Vagina (tissue), 2 donors: ENCODE measurements at regions of chr11 and their contacts with region 1.

Region 1: GRCh38 chr11:114059278-114059983 is at the start of gene ZBTB16:
- DNase-seq: no peak
- H3K4me3 ChIP-seq: peak within 1 kb of the TSS; percentile 81 to 97
- H3K27ac ChIP-seq: peak within 1 kb of the TSS; percentile 96
- H3K4me1 ChIP-seq: peaks cover 42% of the 10 kb centered on the region
- H3K27me3 ChIP-seq: no peaks in the 10 kb centered on the region
- CTCF ChIP-seq: peak in 2 of 3 experiments; percentile 6 to 29
- POLR2A ChIP-seq: peak; percentile 7 to 81
- total RNA-seq, gene ZBTB16: 243 TPM

Region 2: GRCh38 chr11:114159802-114160632 is 100.6 kb after region 1 on chr11:
- intact Hi-C with region 1: loop called (anchors 2 kb)
- DNase-seq: peak in 1 of 2 donors; percentile 98
- H3K4me3 ChIP-seq: peak overlapping the region; percentile 26 to 31
- H3K27ac ChIP-seq: peak overlapping the region; percentile 95
- H3K4me1 ChIP-seq: peaks cover 99% of the 10 kb centered on the region
- H3K27me3 ChIP-seq: no peaks in the 10 kb centered on the region
- CTCF ChIP-seq: no peak
- POLR2A ChIP-seq: peak in 1 of 2 donors; percentile 4

Region 3: GRCh38 chr11:114171257-114172054 is 112.0 kb after region 1 on chr11:
- intact Hi-C with region 1: loop called (anchors 2 kb)
- DNase-seq: no peak
- H3K4me3 ChIP-seq: no peak overlapping the region
- H3K27ac ChIP-seq: peak overlapping the region; percentile 95
- H3K4me1 ChIP-seq: peaks cover 96% of the 10 kb centered on the region
- H3K27me3 ChIP-seq: no peaks in the 10 kb centered on the region
- CTCF ChIP-seq: no peak
- POLR2A ChIP-seq: no peak

Region 4: GRCh38 chr11:114250993-114251814 is 191.8 kb after region 1 on chr11:
- intact Hi-C with region 1: loop called (anchors 5 kb)
- DNase-seq: no peak
- H3K4me3 ChIP-seq: no peak overlapping the region
- H3K27ac ChIP-seq: peak overlapping the region; percentile 23
- H3K4me1 ChIP-seq: peaks cover 30% of the 10 kb centered on the region
- H3K27me3 ChIP-seq: no peaks in the 10 kb centered on the region
- CTCF ChIP-seq: no peak
- POLR2A ChIP-seq: no peak

Region 5: DNA sequence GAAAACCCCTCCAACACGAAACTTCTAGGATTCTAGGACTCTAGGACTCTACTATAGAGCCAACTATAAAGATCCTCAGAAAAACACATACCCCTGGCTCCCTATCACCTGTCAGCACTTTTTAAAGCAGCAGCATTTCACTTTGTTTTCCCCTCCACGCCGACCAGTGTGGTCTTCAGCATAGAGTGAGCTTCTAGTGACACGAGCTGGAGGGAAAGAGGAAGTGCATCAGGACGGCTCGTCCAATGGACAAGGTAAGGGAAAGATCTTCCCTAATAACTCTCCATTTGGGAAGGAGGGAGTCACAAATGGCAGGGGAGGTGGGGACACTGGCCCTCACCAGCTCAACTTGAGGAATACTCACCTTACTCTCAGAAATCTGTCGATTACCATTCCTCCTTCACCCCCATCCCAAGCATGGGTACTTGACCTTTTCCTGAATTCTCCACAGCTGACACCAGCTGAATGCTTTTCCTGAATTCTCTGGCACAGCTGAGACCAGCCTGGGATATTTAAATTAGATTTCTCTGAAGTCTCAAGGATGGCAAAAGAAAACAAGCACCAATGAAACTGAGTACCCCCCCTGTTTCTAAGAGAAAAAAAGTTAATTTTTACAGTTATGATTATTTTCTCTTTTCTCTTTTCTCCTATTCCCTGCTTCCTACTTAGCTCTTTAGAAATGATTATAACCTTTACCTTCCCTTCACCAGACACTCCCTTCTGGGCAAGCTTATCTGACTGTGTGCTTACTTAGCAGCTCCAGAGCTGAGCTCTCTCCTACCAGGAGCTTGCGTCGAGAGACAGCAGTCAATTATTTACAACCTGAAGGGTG is 203.5 kb after region 1 on chr11:
- intact Hi-C with region 1: loop called (anchors 2 kb)
- DNase-seq: no peak
- H3K4me3 ChIP-seq: no peak overlapping the region
- H3K27ac ChIP-seq: no peak overlapping the region
- H3K4me1 ChIP-seq: peaks cover 45% of the 10 kb centered on the region
- H3K27me3 ChIP-seq: no peaks in the 10 kb centered on the region
- CTCF ChIP-seq: peak in 2 of 3 experiments; percentile 23 to 26
- POLR2A ChIP-seq: no peak